CD4-positive, alpha-beta T cell (primary cell): ENCODE measurements at regions of chr2 and their contacts with region 1.

Region 1: DNA sequence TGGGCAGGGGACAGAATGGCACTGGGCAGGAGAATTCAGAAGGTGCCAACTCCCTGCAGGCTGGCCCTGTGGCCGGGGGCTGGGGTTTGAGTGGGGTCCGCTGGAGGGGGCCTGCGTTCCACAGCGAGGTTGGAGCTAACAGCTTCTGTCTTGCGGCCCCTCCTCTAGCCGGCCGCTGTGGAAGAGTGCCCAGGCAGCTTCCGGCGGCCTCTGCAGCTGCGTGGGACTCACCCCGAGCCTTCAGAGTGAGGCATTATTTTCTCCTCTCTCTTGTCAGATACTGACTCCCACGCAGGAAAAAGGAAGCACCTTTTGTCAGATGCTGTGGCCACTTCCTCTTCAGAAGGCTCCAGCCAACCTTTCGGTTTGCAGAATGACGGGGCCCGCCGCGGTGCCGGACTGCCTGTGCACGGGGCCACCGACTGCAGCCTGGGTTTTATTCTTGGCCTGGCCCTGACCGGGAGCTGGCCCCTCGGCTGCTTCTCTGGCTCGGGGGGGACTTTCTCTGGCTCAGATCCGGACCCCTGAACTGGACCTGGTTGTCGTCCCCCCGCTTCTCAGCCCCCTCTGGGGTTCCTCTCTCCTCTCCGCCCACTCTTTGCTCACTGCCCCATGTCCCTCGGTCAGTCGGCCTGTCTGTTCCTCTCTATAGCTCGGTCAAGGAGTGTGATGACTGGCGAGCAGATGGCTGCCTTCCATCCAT is 40.1 kb downstream of the ARHGAP25 start:
- DNase-seq: peak in 12 of 14 experiments; percentile 26 to 87 (median 48)
- ATAC-seq: peak; percentile 59
- H3K4me3 ChIP-seq: peak overlapping the region; percentile 66
- H3K4me3 Mint-ChIP-seq: peak overlapping the region; percentile 88
- H3K27ac ChIP-seq: peak overlapping the region; percentile 81 to 89
- H3K27ac Mint-ChIP-seq: peak overlapping the region; percentile 94
- H3K4me1 ChIP-seq: peaks cover 86% of the 10 kb centered on the region
- H3K4me1 Mint-ChIP-seq: peaks cover 91% of the 10 kb centered on the region
- H3K27me3 ChIP-seq: no peaks in the 10 kb centered on the region
- H3K27me3 Mint-ChIP-seq: no peaks in the 10 kb centered on the region
- CTCF ChIP-seq: no peak

Region 2: GRCh38 chr2:68172990-68173700 is 601.6 kb before region 1 on chr2:
- CTCF ChIA-PET with region 1: no interaction called
- POLR2A ChIA-PET with region 1: no interaction called
- intact Hi-C with region 1: no loop called
- DNase-seq: peak in 2 of 14 experiments; percentile 12 to 17
- ATAC-seq: no peak
- H3K4me3 ChIP-seq: no peak overlapping the region
- H3K4me3 Mint-ChIP-seq: no peak overlapping the region
- H3K27ac ChIP-seq: no peak overlapping the region
- H3K27ac Mint-ChIP-seq: peak overlapping the region; percentile 50
- H3K4me1 ChIP-seq: no peaks in the 10 kb centered on the region
- H3K4me1 Mint-ChIP-seq: peaks cover 2% of the 10 kb centered on the region
- H3K27me3 ChIP-seq: no peaks in the 10 kb centered on the region
- H3K27me3 Mint-ChIP-seq: no peaks in the 10 kb centered on the region
- CTCF ChIP-seq: no peak

Region 3: DNA sequence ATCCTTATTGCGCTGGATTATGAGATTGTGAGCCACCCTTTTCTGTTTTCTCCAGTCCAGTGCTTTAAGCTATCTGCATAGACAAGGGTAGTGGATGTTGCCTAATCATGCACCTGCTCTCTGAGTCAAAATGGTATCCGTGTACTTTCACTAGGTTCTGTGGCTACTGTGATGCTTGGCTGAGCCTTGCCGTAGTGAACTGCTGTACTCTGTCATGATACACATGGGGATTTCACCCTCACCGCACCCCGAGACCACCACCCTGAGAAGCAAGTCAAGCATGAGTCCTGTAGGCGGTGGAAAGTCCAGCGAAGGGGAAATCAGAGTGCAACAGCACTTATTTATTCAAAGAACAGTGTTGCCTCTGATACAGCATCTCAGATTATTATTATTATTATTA is 14.9 kb after region 1 on chr2:
- CTCF ChIA-PET with region 1: interaction called, 4 read pairs
- POLR2A ChIA-PET with region 1: interaction called, 15 read pairs
- intact Hi-C with region 1: no loop called
- DNase-seq: peak in 2 of 14 experiments; percentile 28 to 53
- ATAC-seq: peak; percentile 26
- H3K4me3 ChIP-seq: no peak overlapping the region
- H3K4me3 Mint-ChIP-seq: no peak overlapping the region
- H3K27ac ChIP-seq: no peak overlapping the region
- H3K27ac Mint-ChIP-seq: peak overlapping the region; percentile 91
- H3K4me1 ChIP-seq: peaks cover 45% of the 10 kb centered on the region
- H3K4me1 Mint-ChIP-seq: peaks cover 49% of the 10 kb centered on the region
- H3K27me3 ChIP-seq: no peaks in the 10 kb centered on the region
- H3K27me3 Mint-ChIP-seq: no peaks in the 10 kb centered on the region
- CTCF ChIP-seq: no peak

Region 4: GRCh38 chr2:68828887-68829708 is 54.4 kb after region 1 on chr2:
- CTCF ChIA-PET with region 1: no interaction called
- POLR2A ChIA-PET with region 1: interaction called, 15 read pairs
- intact Hi-C with region 1: no loop called
- DNase-seq: peak; percentile 40 to 91 (median 64)
- ATAC-seq: peak; percentile 86
- H3K4me3 ChIP-seq: no peak overlapping the region
- H3K4me3 Mint-ChIP-seq: peak overlapping the region; percentile 68
- H3K27ac ChIP-seq: peak overlapping the region; percentile 69 to 70
- H3K27ac Mint-ChIP-seq: peak overlapping the region; percentile 87
- H3K4me1 ChIP-seq: peaks cover 44% of the 10 kb centered on the region
- H3K4me1 Mint-ChIP-seq: peaks cover 74% of the 10 kb centered on the region
- H3K27me3 ChIP-seq: no peaks in the 10 kb centered on the region
- H3K27me3 Mint-ChIP-seq: no peaks in the 10 kb centered on the region
- CTCF ChIP-seq: no peak